CD4-positive, alpha-beta T cell (primary cell): ENCODE measurements at regions of chr10 and their contacts with region 1.

Region 1: DNA sequence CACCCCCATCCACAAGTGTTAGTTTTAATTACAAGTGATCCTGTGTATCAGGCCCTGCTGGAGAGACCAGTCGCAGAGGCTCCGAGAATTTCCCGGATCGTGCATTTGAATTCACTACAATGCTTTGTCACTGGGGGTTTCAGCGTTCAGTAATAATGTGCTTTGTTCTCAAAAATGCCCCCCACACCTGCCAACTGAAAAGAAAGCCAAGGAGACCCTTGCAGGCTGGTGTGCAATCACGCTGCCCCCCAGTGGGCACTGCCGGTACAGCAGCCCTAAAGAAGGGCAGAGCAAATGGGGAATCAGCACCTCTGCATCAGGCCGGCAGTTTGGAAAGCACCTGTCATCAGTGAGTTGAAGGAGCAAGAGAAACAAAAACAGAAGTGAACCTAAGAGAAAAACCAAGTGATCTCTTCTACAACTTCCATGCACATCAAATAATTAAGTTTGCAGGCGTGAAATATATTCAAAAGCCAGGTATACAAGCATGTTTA is 177.6 kb downstream of the PARD3 start:
- DNase-seq: peak; percentile 36 to 74 (median 52)
- ATAC-seq: peak; percentile 77
- H3K4me3 ChIP-seq: no peak overlapping the region
- H3K4me3 Mint-ChIP-seq: no peak overlapping the region
- H3K27ac ChIP-seq: no peak overlapping the region
- H3K27ac Mint-ChIP-seq: no peak overlapping the region
- H3K4me1 ChIP-seq: peaks cover 6% of the 10 kb centered on the region
- H3K4me1 Mint-ChIP-seq: peaks cover 13% of the 10 kb centered on the region
- H3K27me3 ChIP-seq: no peaks in the 10 kb centered on the region
- H3K27me3 Mint-ChIP-seq: no peaks in the 10 kb centered on the region
- CTCF ChIP-seq: peak; percentile 94

Region 2: DNA sequence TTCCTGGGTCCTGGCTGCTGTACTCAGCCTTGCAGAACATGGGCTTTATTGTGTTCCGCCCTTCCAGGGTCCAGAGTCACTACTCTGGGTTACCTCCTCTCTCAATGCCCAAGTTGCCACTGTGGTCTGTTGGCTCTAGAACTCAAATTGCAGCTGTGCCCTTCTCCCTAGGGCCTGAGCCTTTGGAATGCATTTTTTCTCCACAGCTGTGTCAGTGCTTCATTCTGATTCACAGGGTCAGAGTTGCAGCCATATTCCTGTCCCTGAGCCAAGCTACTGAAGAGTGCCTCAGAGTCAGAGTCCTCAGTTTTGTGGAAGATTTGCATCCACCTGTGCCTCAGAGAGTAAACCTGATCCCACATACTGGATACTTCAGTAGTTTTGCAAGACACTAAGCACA is 1847.0 kb before region 1 on chr10:
- CTCF ChIA-PET with region 1: no interaction called
- POLR2A ChIA-PET with region 1: no interaction called
- intact Hi-C with region 1: loop called (anchors 2 to 5 kb)
- DNase-seq: no peak
- ATAC-seq: no peak
- H3K4me3 ChIP-seq: no peak overlapping the region
- H3K4me3 Mint-ChIP-seq: no peak overlapping the region
- H3K27ac ChIP-seq: no peak overlapping the region
- H3K27ac Mint-ChIP-seq: no peak overlapping the region
- H3K4me1 ChIP-seq: no peaks in the 10 kb centered on the region
- H3K4me1 Mint-ChIP-seq: no peaks in the 10 kb centered on the region
- H3K27me3 ChIP-seq: no peaks in the 10 kb centered on the region
- H3K27me3 Mint-ChIP-seq: no peaks in the 10 kb centered on the region
- CTCF ChIP-seq: no peak

Region 3: DNA sequence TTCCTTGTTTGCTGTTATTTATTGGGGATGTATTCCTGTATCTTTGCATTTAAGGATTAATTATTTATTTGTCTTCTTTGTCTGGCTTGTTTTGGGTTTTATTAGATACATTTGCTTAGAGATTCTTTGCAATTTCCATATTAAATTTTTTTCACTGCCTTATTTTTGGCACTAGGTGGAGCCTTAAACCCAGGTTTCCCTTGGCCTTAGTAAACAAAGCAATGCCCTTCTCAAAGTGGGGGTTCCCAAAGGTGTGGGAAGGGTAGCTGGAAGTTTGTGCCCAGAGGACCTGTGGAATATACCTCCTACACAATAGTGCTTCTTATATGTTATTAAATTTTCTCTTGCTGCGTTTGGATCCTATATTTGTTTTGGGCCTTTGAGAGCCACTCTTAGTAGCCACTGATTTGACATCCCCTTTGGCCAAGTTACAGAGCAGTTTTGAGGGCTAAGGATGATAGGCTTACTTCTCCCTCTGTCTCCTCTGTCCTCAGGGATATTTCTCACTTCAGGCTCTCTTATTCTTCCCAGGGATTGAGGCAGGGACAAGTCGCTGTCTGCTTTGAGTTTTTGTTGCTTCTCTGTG is 1841.8 kb before region 1 on chr10:
- CTCF ChIA-PET with region 1: no interaction called
- POLR2A ChIA-PET with region 1: no interaction called
- intact Hi-C with region 1: loop called (anchors 2 to 5 kb)
- DNase-seq: peak in 4 of 14 experiments; percentile 23 to 66 (median 58)
- ATAC-seq: peak; percentile 46
- H3K4me3 ChIP-seq: no peak overlapping the region
- H3K4me3 Mint-ChIP-seq: no peak overlapping the region
- H3K27ac ChIP-seq: no peak overlapping the region
- H3K27ac Mint-ChIP-seq: no peak overlapping the region
- H3K4me1 ChIP-seq: no peaks in the 10 kb centered on the region
- H3K4me1 Mint-ChIP-seq: no peaks in the 10 kb centered on the region
- H3K27me3 ChIP-seq: no peaks in the 10 kb centered on the region
- H3K27me3 Mint-ChIP-seq: no peaks in the 10 kb centered on the region
- CTCF ChIP-seq: peak; percentile 83

Region 4: DNA sequence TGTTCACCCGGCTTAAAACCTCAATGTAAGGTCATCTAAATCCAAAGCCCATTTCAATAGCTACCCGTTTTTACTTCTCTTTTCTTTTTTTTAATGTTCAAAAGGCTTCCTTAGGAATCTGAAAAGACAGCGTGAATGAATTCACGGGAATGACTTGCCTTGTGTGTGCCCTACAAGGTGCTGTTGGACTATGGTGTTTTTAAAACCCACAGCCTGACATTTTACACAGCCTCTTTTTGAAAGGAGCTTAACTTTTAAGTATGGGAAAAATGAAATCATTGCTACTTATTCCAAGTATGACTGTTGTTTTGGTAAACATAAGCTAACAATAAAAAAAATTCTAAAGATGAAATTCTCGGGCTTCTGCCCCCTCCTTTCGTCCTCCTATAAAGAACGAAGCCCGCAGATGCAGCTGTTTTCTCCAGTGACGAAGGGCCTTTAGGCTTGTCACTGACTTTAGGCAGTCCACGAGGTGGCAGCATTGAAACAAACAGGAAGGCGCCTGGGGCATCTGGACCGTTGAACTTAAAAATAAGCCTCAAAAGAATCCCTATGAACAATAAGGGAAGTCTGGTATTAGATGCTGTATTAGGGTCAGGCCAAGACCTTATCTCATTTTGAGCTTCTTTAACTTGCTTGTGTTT is 1444.3 kb before region 1 on chr10:
- CTCF ChIA-PET with region 1: interaction called, 7 read pairs
- POLR2A ChIA-PET with region 1: no interaction called
- intact Hi-C with region 1: loop called (anchors 1 to 2 kb)
- DNase-seq: peak; percentile 57 to 85 (median 72)
- ATAC-seq: peak; percentile 77
- H3K4me3 ChIP-seq: no peak overlapping the region
- H3K4me3 Mint-ChIP-seq: no peak overlapping the region
- H3K27ac ChIP-seq: no peak overlapping the region
- H3K27ac Mint-ChIP-seq: no peak overlapping the region
- H3K4me1 ChIP-seq: peaks cover 5% of the 10 kb centered on the region
- H3K4me1 Mint-ChIP-seq: peaks cover 7% of the 10 kb centered on the region
- H3K27me3 ChIP-seq: no peaks in the 10 kb centered on the region
- H3K27me3 Mint-ChIP-seq: peaks cover 8% of the 10 kb centered on the region
- CTCF ChIP-seq: peak; percentile 84

Region 5: DNA sequence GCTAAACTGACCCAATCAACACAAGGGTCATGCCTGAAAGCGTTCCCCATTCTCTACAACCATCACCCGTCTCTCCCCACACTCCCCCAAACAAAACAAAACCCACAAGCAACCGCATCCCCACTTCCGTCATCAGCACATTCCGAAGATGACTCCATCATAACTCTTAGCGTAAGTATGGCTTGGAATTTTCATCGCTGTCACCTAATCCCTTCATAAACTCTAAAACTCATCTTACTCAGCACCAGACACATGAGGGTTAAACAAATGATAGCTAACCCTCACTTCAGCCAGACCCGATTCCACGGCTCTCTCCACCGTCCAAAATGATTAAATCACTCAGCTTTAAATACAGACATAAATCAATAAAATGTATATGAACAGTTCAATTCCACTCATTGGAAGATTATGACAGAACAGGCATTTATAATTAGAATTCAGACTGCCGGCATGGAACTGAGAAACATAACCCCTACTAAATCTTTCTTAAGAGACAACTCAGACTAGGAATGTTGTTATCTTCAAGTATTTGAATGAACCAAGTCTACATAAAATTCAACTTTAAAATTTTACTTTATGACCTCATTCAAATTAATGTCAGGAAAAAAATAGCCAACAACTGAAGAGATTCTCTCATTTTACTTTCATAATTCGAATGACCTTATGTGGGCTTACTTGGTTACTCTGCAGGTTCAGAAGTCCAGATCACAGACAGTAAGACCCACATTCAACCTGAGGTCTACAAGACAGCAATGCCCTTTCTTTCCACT is 38.3 kb before region 1 on chr10:
- CTCF ChIA-PET with region 1: no interaction called
- POLR2A ChIA-PET with region 1: no interaction called
- intact Hi-C with region 1: no loop called
- DNase-seq: no peak
- ATAC-seq: no peak
- H3K4me3 ChIP-seq: no peak overlapping the region
- H3K4me3 Mint-ChIP-seq: no peak overlapping the region
- H3K27ac ChIP-seq: no peak overlapping the region
- H3K27ac Mint-ChIP-seq: no peak overlapping the region
- H3K4me1 ChIP-seq: no peaks in the 10 kb centered on the region
- H3K4me1 Mint-ChIP-seq: no peaks in the 10 kb centered on the region
- H3K27me3 ChIP-seq: no peaks in the 10 kb centered on the region
- H3K27me3 Mint-ChIP-seq: no peaks in the 10 kb centered on the region
- CTCF ChIP-seq: no peak